Endothelial cell of umbilical vein (primary cell): ENCODE measurements at regions of chr22 and their contacts with region 1.

Region 1: DNA sequence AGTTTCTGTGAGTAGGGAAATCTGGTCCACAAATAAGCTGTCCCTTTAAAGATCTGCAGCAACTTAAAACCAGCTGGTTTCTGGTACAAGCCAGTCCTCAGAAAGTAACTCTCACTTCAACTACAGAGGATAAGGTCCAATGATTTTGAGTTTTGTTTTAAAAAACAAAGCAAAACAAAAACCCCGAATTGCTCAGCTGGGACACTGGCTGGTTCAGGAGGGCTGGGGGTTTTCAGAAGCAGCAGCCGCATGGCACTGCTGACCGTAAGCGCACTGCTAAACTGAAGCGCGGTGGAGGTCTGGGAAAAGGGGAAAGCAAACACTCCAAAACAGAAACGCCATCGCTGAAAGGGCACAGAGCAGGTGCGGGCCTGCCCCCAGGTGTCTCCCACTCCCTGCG is 59.7 kb downstream of the MICAL3 start:
- DNase-seq: no peak
- H3K4me3 ChIP-seq: no peak overlapping the region
- H3K27ac ChIP-seq: no peak overlapping the region
- H3K4me1 ChIP-seq: peaks cover 5% of the 10 kb centered on the region
- H3K27me3 ChIP-seq: no peaks in the 10 kb centered on the region
- CTCF ChIP-seq: no peak
- POLR2A ChIP-seq: no peak

Region 2: DNA sequence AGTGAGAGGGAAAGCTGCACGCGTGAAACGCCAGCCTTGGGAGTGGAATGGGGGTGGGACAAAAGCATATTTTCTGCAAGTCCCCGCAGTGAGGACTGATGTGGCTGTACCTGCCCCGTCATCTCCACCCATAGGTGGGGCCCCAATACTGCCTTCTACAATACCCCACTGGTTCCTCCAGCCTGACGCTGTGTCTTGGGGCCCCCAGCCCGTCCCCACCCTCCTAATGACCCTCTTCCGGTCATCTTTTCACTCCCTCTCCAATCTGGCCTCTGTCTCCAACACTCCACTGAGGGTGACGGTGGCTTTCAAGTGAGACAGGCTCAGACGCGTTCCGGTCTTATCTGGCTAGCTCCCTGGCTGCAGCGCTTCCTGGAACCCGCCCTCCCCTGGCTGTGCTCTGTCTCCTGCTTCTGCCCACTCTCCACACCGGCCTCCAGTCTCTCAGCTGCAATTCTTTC is 44.5 kb before region 1 on chr22:
- CTCF ChIA-PET with region 1: interaction called, 3 read pairs
- POLR2A ChIA-PET with region 1: no interaction called
- dilution Hi-C with region 1: no loop called
- intact Hi-C with region 1: loop called (anchors 5 kb)
- DNase-seq: peak; percentile 44
- H3K4me3 ChIP-seq: no peak overlapping the region
- H3K27ac ChIP-seq: no peak overlapping the region
- H3K4me1 ChIP-seq: peaks cover 29% of the 10 kb centered on the region
- H3K27me3 ChIP-seq: no peaks in the 10 kb centered on the region
- CTCF ChIP-seq: no peak
- POLR2A ChIP-seq: no peak

Region 3: DNA sequence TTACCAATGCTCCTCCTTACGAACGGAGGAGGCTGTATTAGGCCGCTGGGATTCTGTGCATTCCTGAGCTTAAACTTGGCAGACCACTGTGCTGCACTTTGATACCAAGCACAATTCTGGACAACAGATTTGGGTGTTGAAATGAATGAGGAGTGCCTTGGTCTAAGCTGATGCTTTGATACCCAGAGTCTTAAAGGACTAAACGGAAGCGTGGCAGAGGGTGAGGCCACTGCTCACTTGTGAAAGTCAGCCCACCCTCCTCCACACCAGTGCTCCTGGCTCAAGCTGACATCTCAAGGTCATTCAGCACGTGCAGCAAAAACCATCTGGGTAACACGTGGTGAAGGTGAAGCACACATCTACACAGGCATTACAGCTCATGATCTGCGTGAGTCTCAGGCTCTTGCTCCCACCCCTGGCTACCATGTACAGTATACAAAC is 26.1 kb before region 1 on chr22:
- CTCF ChIA-PET with region 1: no interaction called
- POLR2A ChIA-PET with region 1: no interaction called
- dilution Hi-C with region 1: no loop called
- intact Hi-C with region 1: no loop called
- DNase-seq: no peak
- H3K4me3 ChIP-seq: no peak overlapping the region
- H3K27ac ChIP-seq: no peak overlapping the region
- H3K4me1 ChIP-seq: no peaks in the 10 kb centered on the region
- H3K27me3 ChIP-seq: no peaks in the 10 kb centered on the region
- CTCF ChIP-seq: no peak
- POLR2A ChIP-seq: no peak